Common myeloid progenitor, CD34-positive (primary cell): ENCODE measurements at regions of chr20 and their contacts with region 1.

Region 1: DNA sequence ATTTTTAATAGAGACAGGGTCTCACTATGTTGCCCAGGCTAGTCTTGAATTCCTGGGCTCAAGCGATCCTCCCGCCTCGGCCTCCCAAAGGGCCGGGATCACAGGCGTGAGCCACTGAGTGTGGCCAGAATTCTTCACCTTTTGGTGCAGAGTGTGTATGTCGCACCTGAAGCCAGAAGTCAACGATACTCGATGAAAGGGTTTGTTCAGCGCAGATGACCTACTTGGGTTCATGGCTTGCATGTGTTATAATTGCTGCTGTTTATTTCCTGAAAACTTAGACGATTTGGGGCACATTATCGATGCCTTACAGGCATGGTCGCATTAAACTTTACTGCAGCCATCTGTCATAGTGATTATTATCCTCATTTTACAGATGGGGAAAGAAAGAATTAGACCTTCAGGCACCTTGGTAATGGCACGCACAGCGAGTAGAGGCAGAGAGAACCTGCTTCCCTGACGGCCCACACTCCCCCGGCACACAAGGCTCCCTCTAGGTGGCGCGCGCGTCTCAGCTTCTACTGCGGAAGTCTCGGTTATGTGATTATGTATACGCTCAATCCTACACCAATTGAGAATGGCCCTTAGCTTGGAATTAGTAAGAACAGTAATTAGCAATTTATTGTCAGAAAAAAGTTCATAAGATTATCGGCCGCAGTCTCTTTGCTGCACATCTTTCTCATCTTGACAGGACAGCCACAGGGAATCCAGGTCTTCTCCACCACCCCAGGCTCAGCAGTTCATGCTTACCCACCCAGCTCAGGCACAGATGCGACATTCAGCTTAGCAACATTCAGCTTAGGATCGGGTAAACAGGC is 212.8 kb upstream of the PROKR2 start:
- DNase-seq: peak; percentile 80 to 93 (median 89)
- H3K4me3 ChIP-seq: peak overlapping the region in 5 of 7 experiments; percentile 33 to 70 (median 40)
- H3K27ac ChIP-seq: no peak overlapping the region
- H3K4me1 ChIP-seq: peaks cover 0 to 26% (median 20%) of the 10 kb centered on the region in 4 experiments
- H3K27me3 ChIP-seq: no peaks in the 10 kb centered on the region

Region 2: GRCh38 chr20:5191829-5192569 is 337.5 kb before region 1 on chr20:
- CTCF ChIA-PET with region 1: no interaction called
- POLR2A ChIA-PET with region 1: no interaction called
- DNase-seq: peak; percentile 77 to 88 (median 83)
- H3K4me3 ChIP-seq: no peak overlapping the region
- H3K27ac ChIP-seq: no peak overlapping the region
- H3K4me1 ChIP-seq: peaks cover 0 to 5% (median 0%) of the 10 kb centered on the region in 4 experiments
- H3K27me3 ChIP-seq: no peaks in the 10 kb centered on the region

Region 3: GRCh38 chr20:5222919-5223634 is 306.5 kb before region 1 on chr20:
- CTCF ChIA-PET with region 1: no interaction called
- POLR2A ChIA-PET with region 1: no interaction called
- DNase-seq: peak; percentile 54 to 75 (median 69)
- H3K4me3 ChIP-seq: no peak overlapping the region
- H3K27ac ChIP-seq: no peak overlapping the region
- H3K4me1 ChIP-seq: no peaks in the 10 kb centered on the region
- H3K27me3 ChIP-seq: peaks cover 0 to 3% (median 0%) of the 10 kb centered on the region in 5 experiments

Region 4: GRCh38 chr20:5539691-5540090 is 10.2 kb after region 1 on chr20:
- CTCF ChIA-PET with region 1: interaction called, 22 read pairs
- POLR2A ChIA-PET with region 1: interaction called, 4 read pairs
- DNase-seq: peak in 2 of 3 donors; percentile 42 to 58
- H3K4me3 ChIP-seq: no peak overlapping the region
- H3K27ac ChIP-seq: no peak overlapping the region
- H3K4me1 ChIP-seq: peaks cover 8 to 21% (median 14%) of the 10 kb centered on the region in 4 experiments
- H3K27me3 ChIP-seq: no peaks in the 10 kb centered on the region

Region 5: GRCh38 chr20:5550733-5551529 is 21.4 kb after region 1 on chr20:
- CTCF ChIA-PET with region 1: interaction called, 66 read pairs
- POLR2A ChIA-PET with region 1: no interaction called
- DNase-seq: peak in 2 of 3 donors; percentile 24 to 35
- H3K4me3 ChIP-seq: no peak overlapping the region
- H3K27ac ChIP-seq: no peak overlapping the region
- H3K4me1 ChIP-seq: no peaks in the 10 kb centered on the region
- H3K27me3 ChIP-seq: no peaks in the 10 kb centered on the region

Region 6: DNA sequence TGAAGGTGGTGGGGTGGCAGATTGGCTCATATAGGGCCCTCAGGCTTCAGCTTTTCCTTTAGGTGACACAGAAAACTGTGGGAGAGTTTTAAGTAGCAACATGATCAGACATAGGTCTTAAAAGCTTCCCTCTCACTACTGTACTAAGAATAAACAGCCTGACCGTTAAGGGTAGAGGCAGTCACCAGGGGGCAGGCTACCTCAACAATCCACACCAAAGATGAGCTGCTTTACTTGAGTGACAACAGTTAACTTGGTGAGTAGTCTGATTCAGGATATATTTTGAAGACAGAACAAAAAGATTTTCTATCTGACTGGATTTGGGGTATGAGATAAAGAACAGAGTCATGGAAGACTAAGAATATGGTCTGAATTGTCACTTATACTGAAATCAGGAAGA is 27.6 kb after region 1 on chr20:
- CTCF ChIA-PET with region 1: interaction called, 66 read pairs
- POLR2A ChIA-PET with region 1: interaction called, 4 read pairs
- DNase-seq: peak; percentile 50 to 75 (median 68)
- H3K4me3 ChIP-seq: no peak overlapping the region
- H3K27ac ChIP-seq: no peak overlapping the region
- H3K4me1 ChIP-seq: no peaks in the 10 kb centered on the region
- H3K27me3 ChIP-seq: no peaks in the 10 kb centered on the region

Region 7: DNA sequence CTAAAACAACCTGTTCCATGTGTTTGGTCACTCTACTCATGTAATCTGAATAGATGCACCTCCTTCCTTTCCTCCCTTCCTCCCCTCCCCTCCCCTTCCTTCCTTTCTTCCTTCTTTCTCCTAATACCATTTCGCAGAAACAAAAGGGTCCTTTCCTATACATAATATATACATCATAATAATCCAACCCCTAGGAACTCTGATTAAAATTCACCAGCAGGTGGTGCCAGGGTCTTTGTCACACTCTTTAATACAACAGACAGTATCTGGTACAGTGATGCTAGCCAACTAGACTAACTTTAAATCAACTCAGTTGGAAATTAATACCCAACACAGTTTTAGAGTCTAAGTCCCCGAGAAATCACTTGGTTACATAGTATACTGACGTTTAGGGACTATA is 39.5 kb after region 1 on chr20:
- CTCF ChIA-PET with region 1: interaction called, 14 read pairs
- POLR2A ChIA-PET with region 1: no interaction called
- DNase-seq: peak; percentile 63 to 82 (median 74)
- H3K4me3 ChIP-seq: no peak overlapping the region
- H3K27ac ChIP-seq: no peak overlapping the region
- H3K4me1 ChIP-seq: no peaks in the 10 kb centered on the region
- H3K27me3 ChIP-seq: no peaks in the 10 kb centered on the region

Region 8: DNA sequence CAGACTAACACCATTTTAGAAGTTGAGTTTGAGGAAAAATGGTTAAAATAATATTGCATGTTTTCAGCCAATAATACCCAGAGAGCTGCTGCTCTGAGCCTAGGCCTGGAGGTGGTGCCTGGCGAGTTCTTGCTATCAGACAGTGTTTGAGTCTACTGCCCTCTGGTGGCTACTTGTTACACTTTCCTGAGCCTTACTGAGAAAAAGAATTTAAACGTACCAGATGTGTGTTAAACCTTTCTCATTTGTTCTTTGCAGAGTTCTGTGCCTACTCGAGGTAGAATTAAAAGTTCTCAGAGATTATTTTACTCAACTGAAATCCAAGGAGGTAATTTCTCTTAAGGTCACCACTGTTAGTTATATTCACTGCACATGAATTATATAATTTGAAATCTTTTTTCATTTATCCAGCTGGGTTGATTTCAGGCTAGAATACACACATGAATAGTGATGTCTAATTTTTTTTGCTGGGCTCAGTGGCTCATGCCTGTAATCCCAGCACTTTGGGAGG is 258.9 kb after region 1 on chr20:
- CTCF ChIA-PET with region 1: interaction called, 74 read pairs
- POLR2A ChIA-PET with region 1: no interaction called
- DNase-seq: peak; percentile 89 to 95 (median 92)
- H3K4me3 ChIP-seq: no peak overlapping the region
- H3K27ac ChIP-seq: no peak overlapping the region
- H3K4me1 ChIP-seq: peaks cover 0 to 7% (median 0%) of the 10 kb centered on the region in 4 experiments
- H3K27me3 ChIP-seq: no peaks in the 10 kb centered on the region

Region 9: DNA sequence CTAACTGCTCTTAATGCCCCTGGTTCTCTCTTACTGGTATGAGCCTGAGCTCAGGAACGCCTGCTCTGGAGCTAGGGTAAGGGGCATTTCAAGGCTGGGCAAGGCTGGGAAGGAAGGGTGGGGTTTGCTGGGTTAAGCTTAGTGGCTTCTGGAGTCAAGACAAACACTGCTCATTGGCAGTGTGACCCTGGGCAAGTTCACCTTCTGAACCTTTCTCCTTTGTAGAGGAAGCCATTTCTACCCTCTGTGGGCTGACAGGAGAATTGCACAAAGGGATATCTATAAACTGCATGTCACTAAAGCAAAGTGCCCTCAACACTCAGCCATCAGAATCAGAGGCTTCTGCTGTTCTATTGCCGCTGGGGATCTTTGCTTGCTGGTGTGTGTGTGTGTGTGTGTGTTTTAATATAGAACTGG is 544.6 kb after region 1 on chr20:
- CTCF ChIA-PET with region 1: interaction called, 20 read pairs
- POLR2A ChIA-PET with region 1: no interaction called
- DNase-seq: peak; percentile 29 to 53 (median 47)
- H3K4me3 ChIP-seq: no peak overlapping the region
- H3K27ac ChIP-seq: no peak overlapping the region
- H3K4me1 ChIP-seq: peaks cover 0 to 12% (median 3%) of the 10 kb centered on the region in 4 experiments
- H3K27me3 ChIP-seq: peaks cover 0 to 4% (median 0%) of the 10 kb centered on the region in 5 experiments